ENCODE measurements at regions of chr3 and their contacts with region 1.

Region 1: DNA sequence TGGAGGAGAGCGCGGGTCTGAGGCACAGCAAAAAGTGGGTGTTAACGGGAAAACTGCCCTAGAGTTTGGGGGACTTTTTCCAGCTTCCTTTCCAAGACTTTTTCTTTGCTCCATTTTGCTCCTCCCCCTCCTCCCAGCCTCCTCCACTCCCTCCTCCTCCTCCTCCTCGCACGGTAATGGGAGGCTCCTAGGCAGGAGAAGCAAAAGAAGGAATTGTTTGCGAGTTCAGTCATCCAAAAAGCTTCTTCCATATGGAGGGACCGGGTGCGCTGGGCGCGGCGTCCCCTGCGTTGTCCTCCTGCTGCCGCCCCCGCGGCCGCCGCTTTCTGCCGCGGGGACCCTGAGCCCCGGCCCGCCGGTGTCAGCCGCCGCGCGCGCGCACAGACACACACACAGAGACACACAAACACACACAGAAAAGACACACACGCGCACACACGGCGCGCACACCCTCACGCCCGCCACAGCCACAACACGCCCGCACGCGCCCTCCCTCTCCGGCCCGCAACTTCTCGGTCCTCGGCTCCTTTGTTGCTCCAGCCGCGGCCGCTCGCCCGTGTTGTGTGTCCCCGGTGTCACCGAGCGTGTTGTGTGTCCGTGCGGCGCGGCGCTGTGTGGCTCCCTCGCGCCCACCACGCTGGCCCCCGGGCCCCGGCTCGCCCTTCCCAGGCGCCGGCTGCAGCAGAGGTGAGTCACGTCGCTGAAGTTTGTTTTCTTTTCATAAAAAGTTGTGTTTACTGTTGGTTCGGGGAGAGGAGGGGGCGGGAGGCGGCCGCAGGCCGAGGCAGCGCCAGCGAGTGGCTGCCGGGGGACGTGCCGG is at the start of gene BOC:
- DNase-seq: peak; percentile 36
- H3K4me3 ChIP-seq: peak within 1 kb of the TSS; percentile 85 to 89
- H3K27ac ChIP-seq: peak within 1 kb of the TSS; percentile 89 to 94
- H3K4me1 ChIP-seq: no peaks in the 10 kb centered on the region
- H3K27me3 ChIP-seq: no peaks in the 10 kb centered on the region
- CTCF ChIP-seq: no peak
- POLR2A ChIP-seq: no peak
- total RNA-seq, gene BOC: 41.4 to 42.3 TPM

Region 2: DNA sequence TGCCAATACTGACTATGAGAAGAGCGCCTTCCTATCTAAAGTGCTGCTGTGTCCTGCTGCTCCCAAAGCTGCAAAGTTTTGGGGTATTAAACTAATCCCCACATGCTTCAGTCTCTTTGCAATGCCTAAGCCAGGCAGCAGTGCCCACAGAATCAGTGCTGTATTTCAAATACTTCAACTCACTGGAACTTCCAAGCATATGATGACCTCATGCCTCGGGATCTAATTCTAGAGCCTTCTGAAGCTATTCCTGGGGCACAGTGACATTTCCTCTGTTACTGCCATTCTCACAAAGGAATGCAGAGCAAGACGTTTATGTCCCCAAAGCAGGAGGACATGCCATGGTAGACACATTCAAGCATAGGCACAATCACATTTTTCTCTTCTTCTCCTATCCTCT is 800.1 kb before region 1 on chr3:
- intact Hi-C with region 1: no loop called
- DNase-seq: no peak
- H3K4me3 ChIP-seq: no peak overlapping the region
- H3K27ac ChIP-seq: no peak overlapping the region
- H3K4me1 ChIP-seq: no peaks in the 10 kb centered on the region
- H3K27me3 ChIP-seq: no peaks in the 10 kb centered on the region
- CTCF ChIP-seq: no peak
- POLR2A ChIP-seq: no peak

Region 3: GRCh38 chr3:113151461-113152031 is 60.0 kb before region 1 on chr3:
- intact Hi-C with region 1: loop called (anchors 5 kb)
- DNase-seq: no peak
- H3K4me3 ChIP-seq: no peak overlapping the region
- H3K27ac ChIP-seq: peak overlapping the region; percentile 2 to 36
- H3K4me1 ChIP-seq: no peaks in the 10 kb centered on the region
- H3K27me3 ChIP-seq: no peaks in the 10 kb centered on the region
- CTCF ChIP-seq: no peak
- POLR2A ChIP-seq: no peak

Region 4: GRCh38 chr3:113166719-113167492 is 44.6 kb before region 1 on chr3:
- intact Hi-C with region 1: loop called (anchors 5 kb)
- DNase-seq: peak; percentile 65
- H3K4me3 ChIP-seq: no peak overlapping the region
- H3K27ac ChIP-seq: peak overlapping the region; percentile 51 to 60
- H3K4me1 ChIP-seq: no peaks in the 10 kb centered on the region
- H3K27me3 ChIP-seq: no peaks in the 10 kb centered on the region
- CTCF ChIP-seq: no peak
- POLR2A ChIP-seq: no peak

Region 5: DNA sequence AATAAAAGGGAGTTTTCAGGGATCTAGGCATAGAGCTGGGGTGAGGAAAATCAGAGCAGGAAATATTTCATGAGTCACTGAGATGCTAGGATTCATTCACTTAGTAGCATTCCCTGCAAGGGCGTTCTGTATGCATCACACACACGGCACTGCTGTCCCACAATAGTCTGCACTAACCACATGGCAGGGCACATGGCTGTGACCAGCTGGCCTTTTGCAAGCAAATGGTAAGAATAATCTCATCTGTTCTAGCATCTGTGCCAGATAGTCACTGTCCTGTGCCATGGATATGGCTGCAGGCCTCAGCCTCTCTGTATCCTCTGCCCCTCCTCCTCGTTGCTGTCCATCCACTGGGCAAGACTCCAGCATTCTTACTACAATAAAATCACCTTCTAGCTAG is 37.6 kb after region 1 on chr3:
- intact Hi-C with region 1: loop called (anchors 5 kb)
- DNase-seq: no peak
- H3K4me3 ChIP-seq: no peak overlapping the region
- H3K27ac ChIP-seq: peak overlapping the region in 1 of 2 donors; percentile 68
- H3K4me1 ChIP-seq: no peaks in the 10 kb centered on the region
- H3K27me3 ChIP-seq: no peaks in the 10 kb centered on the region
- CTCF ChIP-seq: no peak
- POLR2A ChIP-seq: no peak

Region 6: DNA sequence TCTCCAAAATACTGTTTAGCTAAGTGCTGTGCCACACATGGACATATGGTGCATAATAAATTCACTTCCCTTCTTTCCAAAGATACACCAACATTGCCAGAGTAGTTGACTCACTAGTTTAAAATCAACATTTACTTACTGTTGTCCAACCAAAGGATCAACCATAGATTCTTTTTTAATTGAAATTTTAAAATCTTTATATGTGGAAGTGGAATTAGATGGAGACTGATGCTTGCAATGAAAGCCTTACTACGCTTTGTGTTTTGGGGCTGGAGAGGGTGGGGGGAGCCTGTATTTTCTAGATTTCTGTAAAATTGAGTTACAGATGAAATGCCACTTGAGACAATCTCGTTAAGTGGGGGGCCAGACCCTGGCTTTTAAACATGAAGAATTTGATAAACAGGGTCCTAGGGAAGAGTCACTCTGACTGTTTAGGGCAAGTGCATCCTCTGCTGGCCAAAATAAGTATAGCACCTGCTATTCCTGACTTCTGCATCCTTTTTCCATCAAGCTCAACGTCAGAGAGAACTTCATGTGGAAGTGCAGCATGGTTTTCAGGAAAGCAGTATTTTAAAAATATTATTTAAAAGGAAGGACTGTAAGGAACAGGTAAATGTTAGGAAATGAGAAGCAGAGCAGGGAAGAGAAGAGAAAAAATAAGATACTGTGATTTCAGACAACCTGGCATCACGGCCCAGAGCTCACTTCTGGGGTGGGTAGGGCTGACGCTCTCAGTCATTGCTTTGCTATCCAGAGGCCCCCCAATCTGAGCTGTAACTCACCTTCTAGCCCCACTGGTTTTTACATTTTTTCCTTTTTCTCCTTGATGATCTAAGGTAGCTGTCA is 76.5 kb after region 1 on chr3:
- intact Hi-C with region 1: loop called (anchors 2 kb)
- DNase-seq: peak; percentile 60
- H3K4me3 ChIP-seq: no peak overlapping the region
- H3K27ac ChIP-seq: peak overlapping the region; percentile 50 to 59
- H3K4me1 ChIP-seq: no peaks in the 10 kb centered on the region
- H3K27me3 ChIP-seq: no peaks in the 10 kb centered on the region
- CTCF ChIP-seq: peak; percentile 97 to 99 (median 98)
- POLR2A ChIP-seq: no peak

Measured in prostate gland (tissue), 2 donors.